MCF 10A (cell line): ENCODE measurements at regions of chr3 and their contacts with region 1.

Region 1: GRCh38 chr3:177359593-177360357 is 162.5 kb upstream of the TBL1XR1 start:
- DNase-seq: peak; percentile 98
- H3K4me3 Mint-ChIP-seq: peak overlapping the region; percentile 61
- H3K27ac Mint-ChIP-seq: peak overlapping the region; percentile 81
- H3K4me1 Mint-ChIP-seq: peaks cover 47% of the 10 kb centered on the region
- H3K27me3 Mint-ChIP-seq: no peaks in the 10 kb centered on the region
- CTCF ChIP-seq: no peak

Region 2: GRCh38 chr3:177197041-177197727 is 162.6 kb before region 1 on chr3 and contains the start of gene TBL1XR1:
- CTCF ChIA-PET with region 1: interaction called, 21 read pairs
- POLR2A ChIA-PET with region 1: interaction called, 66 read pairs
- intact Hi-C with region 1: loop called (anchors 1 kb)
- DNase-seq: peak; percentile 95
- H3K4me3 Mint-ChIP-seq: peak within 1 kb of the TSS; percentile 97
- H3K27ac Mint-ChIP-seq: peak within 1 kb of the TSS; percentile 89
- H3K4me1 Mint-ChIP-seq: peaks cover 30% of the 10 kb centered on the region
- H3K27me3 Mint-ChIP-seq: no peaks in the 10 kb centered on the region
- CTCF ChIP-seq: no peak
- total RNA-seq, gene TBL1XR1: 171 and 178 TPM in 2 replicates

Region 3: GRCh38 chr3:177251755-177252154 is 108.0 kb before region 1 on chr3:
- CTCF ChIA-PET with region 1: no interaction called
- POLR2A ChIA-PET with region 1: no interaction called
- intact Hi-C with region 1: no loop called
- DNase-seq: peak; percentile 24
- H3K4me3 Mint-ChIP-seq: no peak overlapping the region
- H3K27ac Mint-ChIP-seq: no peak overlapping the region
- H3K4me1 Mint-ChIP-seq: no peaks in the 10 kb centered on the region
- H3K27me3 Mint-ChIP-seq: no peaks in the 10 kb centered on the region
- CTCF ChIP-seq: no peak

Region 4: DNA sequence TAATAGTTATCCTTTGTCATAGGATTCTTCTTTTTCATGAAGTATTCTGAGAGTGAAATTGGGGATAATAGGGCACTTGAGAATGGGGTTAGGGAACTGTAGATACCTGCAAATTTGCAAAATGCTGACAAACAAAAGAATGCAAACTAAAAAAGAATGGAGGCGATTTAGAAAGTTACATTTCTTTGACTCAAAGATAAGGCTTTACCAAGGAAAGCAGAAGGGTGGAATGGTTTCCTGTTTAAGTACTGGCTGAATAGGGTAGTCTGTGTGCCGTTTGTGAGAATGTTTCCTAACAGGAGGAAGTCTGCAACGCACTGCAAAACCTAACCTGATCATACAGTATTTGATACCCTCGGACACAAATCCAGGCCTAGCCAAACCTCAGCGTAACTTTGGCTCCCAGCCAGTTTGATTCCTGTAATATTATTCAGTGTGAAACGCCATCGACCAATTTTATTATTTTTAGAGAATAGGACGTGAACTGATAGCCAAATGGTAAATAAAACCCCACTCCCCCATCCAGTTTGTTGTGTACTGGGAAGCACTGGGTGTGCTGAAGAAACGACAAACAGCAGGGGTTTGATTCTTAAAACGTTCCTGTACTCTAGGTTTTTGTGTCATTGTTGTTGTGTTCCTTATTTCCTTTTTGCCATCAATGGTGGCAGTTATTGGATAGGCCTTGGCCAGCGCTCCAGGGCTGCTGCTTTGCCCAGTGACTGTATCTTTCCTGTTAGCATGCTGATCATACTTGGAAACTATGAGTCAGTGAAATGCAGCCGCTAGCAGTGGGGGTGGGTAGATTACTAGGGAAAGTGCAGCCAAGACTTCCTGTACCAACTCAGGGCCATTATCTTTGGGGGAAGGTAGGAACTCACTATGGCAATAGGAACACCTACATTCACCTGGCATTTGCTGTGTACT is 14.5 kb before region 1 on chr3:
- CTCF ChIA-PET with region 1: interaction called, 11 read pairs
- POLR2A ChIA-PET with region 1: interaction called, 11 read pairs
- intact Hi-C with region 1: no loop called
- DNase-seq: peak; percentile 94
- H3K4me3 Mint-ChIP-seq: no peak overlapping the region
- H3K27ac Mint-ChIP-seq: peak overlapping the region; percentile 78
- H3K4me1 Mint-ChIP-seq: peaks cover 39% of the 10 kb centered on the region
- H3K27me3 Mint-ChIP-seq: no peaks in the 10 kb centered on the region
- CTCF ChIP-seq: no peak

Region 5: DNA sequence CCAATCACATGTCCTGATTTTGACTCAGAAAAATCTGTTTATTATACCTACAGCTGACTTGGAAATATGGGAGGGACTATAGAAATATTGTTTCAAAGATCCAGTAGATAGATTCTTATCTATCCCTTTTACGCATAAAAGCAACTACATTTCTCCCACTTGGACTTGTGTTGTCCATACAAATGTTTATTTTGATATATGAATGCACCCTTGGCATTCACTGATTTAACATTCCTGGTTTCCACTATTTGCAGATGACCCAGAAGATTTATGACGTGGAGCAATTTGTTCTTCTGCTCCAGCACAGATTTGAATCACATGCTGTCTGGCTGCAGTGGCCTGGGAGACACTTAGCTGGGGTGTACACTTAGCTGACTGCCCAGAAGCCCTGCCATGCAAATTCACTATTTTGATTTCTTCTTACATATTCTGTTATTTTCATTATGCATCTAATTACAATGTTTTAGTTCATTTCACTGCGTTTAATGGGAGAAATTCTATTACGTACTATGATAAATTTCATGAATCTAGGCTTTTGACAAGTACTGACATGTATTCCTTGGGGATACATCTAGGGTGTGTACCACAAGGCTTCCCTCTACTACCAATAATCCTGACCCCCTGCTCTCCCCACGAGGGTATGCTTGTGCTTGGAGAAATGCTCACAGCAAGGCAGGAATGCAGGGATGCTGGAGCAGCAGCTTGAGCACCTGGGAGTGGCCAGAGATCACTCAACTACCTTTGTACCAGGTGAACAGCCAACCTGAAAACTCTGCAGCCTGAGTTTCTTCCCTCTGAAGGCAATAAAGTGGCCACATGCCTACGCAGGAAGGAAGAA is 61.1 kb after region 1 on chr3:
- CTCF ChIA-PET with region 1: no interaction called
- POLR2A ChIA-PET with region 1: no interaction called
- intact Hi-C with region 1: no loop called
- DNase-seq: no peak
- H3K4me3 Mint-ChIP-seq: no peak overlapping the region
- H3K27ac Mint-ChIP-seq: no peak overlapping the region
- H3K4me1 Mint-ChIP-seq: peaks cover 6% of the 10 kb centered on the region
- H3K27me3 Mint-ChIP-seq: no peaks in the 10 kb centered on the region
- CTCF ChIP-seq: no peak

Region 6: DNA sequence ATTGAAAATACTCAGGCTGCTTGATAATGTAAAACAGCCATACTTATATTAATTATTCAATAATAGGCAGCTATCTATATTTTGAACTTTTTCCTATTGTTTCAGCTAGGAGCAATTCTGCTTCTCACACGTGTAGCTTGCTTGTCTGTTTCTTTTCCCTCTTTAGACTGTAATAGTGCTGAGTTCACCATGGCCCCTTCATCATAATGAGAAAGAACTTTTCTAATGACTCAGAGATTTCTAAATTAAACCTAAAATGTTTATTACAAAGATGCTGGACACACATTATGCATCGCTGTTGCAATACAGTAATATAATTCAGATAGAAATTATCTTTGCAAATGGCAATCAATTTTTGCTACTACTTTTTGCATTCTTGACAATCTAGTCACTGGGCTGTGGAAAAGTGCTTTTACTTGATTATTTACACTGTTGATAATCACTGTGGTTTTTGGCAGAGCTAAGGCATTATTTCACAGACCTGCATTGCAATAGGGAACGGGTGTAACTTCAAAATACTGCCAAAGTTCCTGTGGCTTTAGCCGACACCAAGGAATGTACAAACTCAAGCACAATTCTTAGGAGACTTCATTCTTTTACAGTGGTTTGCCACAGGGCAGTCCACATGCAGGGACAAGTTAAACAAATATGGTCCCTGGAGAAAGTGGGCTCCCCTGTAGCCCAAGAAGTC is 118.5 kb after region 1 on chr3:
- CTCF ChIA-PET with region 1: no interaction called
- POLR2A ChIA-PET with region 1: interaction called, 12 read pairs
- intact Hi-C with region 1: loop called (anchors 1 kb)
- DNase-seq: peak; percentile 98
- H3K4me3 Mint-ChIP-seq: peak overlapping the region; percentile 19
- H3K27ac Mint-ChIP-seq: peak overlapping the region; percentile 92
- H3K4me1 Mint-ChIP-seq: peaks cover 23% of the 10 kb centered on the region
- H3K27me3 Mint-ChIP-seq: no peaks in the 10 kb centered on the region
- CTCF ChIP-seq: no peak

Region 7: DNA sequence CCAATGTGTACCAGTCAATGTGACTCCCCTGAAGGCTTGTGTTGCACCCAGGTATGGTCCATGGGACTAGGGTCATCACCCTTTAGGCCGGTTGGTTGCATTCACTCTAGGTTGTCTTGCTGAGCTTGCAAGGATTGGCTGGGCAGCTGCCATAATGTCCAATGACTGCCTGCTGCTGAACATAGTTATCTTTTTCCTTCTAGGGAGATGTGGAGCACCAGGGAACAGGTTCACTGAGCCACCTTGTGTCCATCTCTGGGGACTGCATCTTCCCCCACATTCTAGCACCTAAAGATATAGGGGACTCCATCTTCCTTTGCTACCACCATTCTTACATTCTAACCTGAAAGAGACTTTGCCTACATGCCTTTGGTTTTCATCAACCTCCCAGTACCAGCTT is 417.9 kb after region 1 on chr3:
- CTCF ChIA-PET with region 1: no interaction called
- POLR2A ChIA-PET with region 1: interaction called, 4 read pairs
- intact Hi-C with region 1: loop called (anchors 1 kb)
- DNase-seq: peak; percentile 74
- H3K4me3 Mint-ChIP-seq: no peak overlapping the region
- H3K27ac Mint-ChIP-seq: no peak overlapping the region
- H3K4me1 Mint-ChIP-seq: peaks cover 15% of the 10 kb centered on the region
- H3K27me3 Mint-ChIP-seq: no peaks in the 10 kb centered on the region
- CTCF ChIP-seq: peak; percentile 49

Region 8: DNA sequence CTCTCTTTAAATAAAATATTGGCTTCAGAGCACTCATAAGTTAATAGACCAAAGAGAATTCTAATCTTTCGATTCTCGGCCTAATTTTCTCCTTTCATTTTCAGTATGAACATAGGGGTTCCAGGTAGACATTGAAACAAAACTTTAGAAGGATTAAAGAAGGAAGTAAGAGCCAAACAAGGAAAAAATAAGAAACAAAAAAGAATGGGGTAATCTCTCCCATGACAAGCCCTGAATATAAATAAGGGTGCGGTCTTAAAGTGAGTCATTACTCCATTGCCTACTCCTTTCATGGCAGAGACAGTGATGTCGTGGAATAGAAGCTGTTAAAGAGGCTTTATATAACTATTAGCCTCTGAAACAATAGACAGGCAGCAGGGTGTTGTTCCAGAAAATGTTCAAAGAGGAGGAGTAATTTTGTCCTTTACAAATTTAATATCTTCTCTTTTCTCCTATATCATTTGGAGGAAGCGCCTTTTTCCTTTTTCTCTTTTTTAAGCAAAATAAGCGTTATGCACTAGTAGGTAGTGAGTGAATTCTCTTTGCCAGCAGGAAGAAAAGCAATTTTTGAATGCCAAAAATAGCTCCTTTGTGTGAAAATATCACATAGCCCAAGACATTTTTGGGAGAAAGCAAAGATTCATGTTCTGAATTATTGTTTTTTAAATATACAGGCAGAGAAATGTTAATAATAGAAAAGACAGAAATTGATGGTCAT is 568.5 kb after region 1 on chr3:
- CTCF ChIA-PET with region 1: no interaction called
- POLR2A ChIA-PET with region 1: no interaction called
- intact Hi-C with region 1: loop called (anchors 1 kb)
- DNase-seq: peak; percentile 73
- H3K4me3 Mint-ChIP-seq: no peak overlapping the region
- H3K27ac Mint-ChIP-seq: peak overlapping the region; percentile 95
- H3K4me1 Mint-ChIP-seq: peaks cover 26% of the 10 kb centered on the region
- H3K27me3 Mint-ChIP-seq: no peaks in the 10 kb centered on the region
- CTCF ChIP-seq: no peak

Region 9: GRCh38 chr3:178385280-178385952 is 1025.6 kb after region 1 on chr3:
- CTCF ChIA-PET with region 1: no interaction called
- POLR2A ChIA-PET with region 1: interaction called, 3 read pairs
- intact Hi-C with region 1: loop called (anchors 1 kb)
- DNase-seq: peak; percentile 51
- H3K4me3 Mint-ChIP-seq: no peak overlapping the region
- H3K27ac Mint-ChIP-seq: no peak overlapping the region
- H3K4me1 Mint-ChIP-seq: peaks cover 18% of the 10 kb centered on the region
- H3K27me3 Mint-ChIP-seq: no peaks in the 10 kb centered on the region
- CTCF ChIP-seq: peak; percentile 69